ENCODE measurements at regions of chr7 and their contacts with region 1.

Region 1: GRCh38 chr7:117127585-117128168 is 174.4 kb downstream of the ST7 start:
- DNase-seq: peak; percentile 49
- H3K4me3 ChIP-seq: no peak overlapping the region
- H3K27ac ChIP-seq: no peak overlapping the region
- H3K4me1 ChIP-seq: peaks cover 3 to 21% (median 7%) of the 10 kb centered on the region in 4 donors
- H3K27me3 ChIP-seq: no peaks in the 10 kb centered on the region
- CTCF ChIP-seq: peak; percentile 65 to 80 (median 75)
- EP300 ChIP-seq: no peak
- POLR2A ChIP-seq: no peak

Region 2: GRCh38 chr7:116173051-116174028 is 954.3 kb before region 1 on chr7:
- in situ Hi-C with region 1: loop called in 1 of 4 experiments (anchors 25 kb)
- intact Hi-C with region 1: no loop called
- DNase-seq: no peak
- H3K4me3 ChIP-seq: no peak overlapping the region
- H3K27ac ChIP-seq: no peak overlapping the region
- H3K4me1 ChIP-seq: peaks cover 0 to 15% (median 6%) of the 10 kb centered on the region in 4 donors
- H3K27me3 ChIP-seq: no peaks in the 10 kb centered on the region
- CTCF ChIP-seq: peak; percentile 43 to 71 (median 51)
- EP300 ChIP-seq: no peak
- POLR2A ChIP-seq: no peak

Region 3: GRCh38 chr7:116929914-116930913 is 197.5 kb before region 1 on chr7:
- in situ Hi-C with region 1: loop called in 3 of 4 experiments (anchors 5 to 10 kb)
- intact Hi-C with region 1: loop called (anchors 5 kb)
- DNase-seq: peak; percentile 85
- H3K4me3 ChIP-seq: no peak overlapping the region
- H3K27ac ChIP-seq: no peak overlapping the region
- H3K4me1 ChIP-seq: peaks cover 0 to 6% (median 0%) of the 10 kb centered on the region in 4 donors
- H3K27me3 ChIP-seq: no peaks in the 10 kb centered on the region
- CTCF ChIP-seq: peak; percentile 90 to 96 (median 93)
- EP300 ChIP-seq: no peak
- POLR2A ChIP-seq: no peak

Region 4: GRCh38 chr7:116938678-116939077 is 189.0 kb before region 1 on chr7:
- in situ Hi-C with region 1: loop called in 2 of 4 experiments (anchors 5 kb)
- intact Hi-C with region 1: loop called (anchors 5 kb)
- DNase-seq: no peak
- H3K4me3 ChIP-seq: no peak overlapping the region
- H3K27ac ChIP-seq: no peak overlapping the region
- H3K4me1 ChIP-seq: no peaks in the 10 kb centered on the region
- H3K27me3 ChIP-seq: no peaks in the 10 kb centered on the region
- CTCF ChIP-seq: no peak
- EP300 ChIP-seq: no peak
- POLR2A ChIP-seq: no peak

Region 5: GRCh38 chr7:116984917-116985316 is 142.8 kb before region 1 on chr7:
- in situ Hi-C with region 1: loop called in 3 of 4 experiments (anchors 5 to 10 kb)
- intact Hi-C with region 1: no loop called
- DNase-seq: no peak
- H3K4me3 ChIP-seq: no peak overlapping the region
- H3K27ac ChIP-seq: no peak overlapping the region
- H3K4me1 ChIP-seq: no peaks in the 10 kb centered on the region
- H3K27me3 ChIP-seq: no peaks in the 10 kb centered on the region
- CTCF ChIP-seq: peak; percentile 57 to 70 (median 59)
- EP300 ChIP-seq: no peak
- POLR2A ChIP-seq: no peak